B cell (primary cell): ENCODE measurements at regions of chr15 and their contacts with region 1.

Region 1: DNA sequence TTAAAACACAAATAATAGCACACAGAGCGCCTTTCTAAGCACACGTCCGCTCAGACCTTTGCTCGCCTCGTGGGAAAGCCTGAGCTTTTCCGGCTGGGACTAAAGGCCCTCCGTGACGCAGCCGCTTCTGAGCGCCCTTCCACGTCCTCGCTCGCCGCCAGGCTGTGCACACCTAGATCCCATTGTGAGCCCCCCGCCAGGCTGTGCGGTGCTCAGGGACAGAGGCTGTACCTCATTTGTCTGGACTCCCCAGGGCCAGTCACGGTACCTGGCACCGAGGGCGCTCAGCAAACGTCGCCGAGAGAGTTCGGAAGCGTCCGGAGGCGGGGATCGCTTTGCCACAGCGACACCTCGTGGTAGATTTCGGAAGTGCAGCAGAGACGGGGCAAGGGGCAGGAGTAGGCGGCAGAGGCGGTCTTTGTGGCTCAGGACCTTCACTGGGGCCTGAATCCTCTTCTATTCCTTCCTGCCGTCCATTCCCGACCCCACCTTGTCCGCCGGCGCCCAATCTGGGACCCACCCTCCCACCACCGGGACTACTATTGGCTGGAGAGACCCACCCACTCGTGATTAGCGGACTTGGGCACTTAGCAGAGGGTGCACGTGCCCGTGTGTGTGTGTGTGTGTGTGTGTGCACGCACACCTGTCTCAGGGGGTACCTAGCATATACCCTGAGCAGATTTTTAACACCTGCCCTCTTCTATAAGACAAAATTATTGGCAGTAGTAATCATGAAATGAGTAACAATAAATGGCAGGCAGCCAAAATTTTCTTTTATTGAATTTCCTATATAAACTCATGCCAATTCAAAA is 65.6 kb downstream of the RHCG start:
- DNase-seq: peak; percentile 90
- ATAC-seq: peak; percentile 97
- H3K4me3 ChIP-seq: peak overlapping the region; percentile 19 to 68 (median 50)
- H3K4me3 Mint-ChIP-seq: peak overlapping the region; percentile 94
- H3K27ac ChIP-seq: no peak overlapping the region
- H3K27ac Mint-ChIP-seq: peak overlapping the region; percentile 17
- H3K4me1 ChIP-seq: peaks cover 4 to 10% of the 10 kb centered on the region in 2 donors
- H3K4me1 Mint-ChIP-seq: peaks cover 7% of the 10 kb centered on the region
- H3K27me3 ChIP-seq: peaks cover 0 to 25% (median 3%) of the 10 kb centered on the region in 4 experiments
- H3K27me3 Mint-ChIP-seq: peaks cover 25% of the 10 kb centered on the region
- CTCF ChIP-seq: peak; percentile 98

Region 2: DNA sequence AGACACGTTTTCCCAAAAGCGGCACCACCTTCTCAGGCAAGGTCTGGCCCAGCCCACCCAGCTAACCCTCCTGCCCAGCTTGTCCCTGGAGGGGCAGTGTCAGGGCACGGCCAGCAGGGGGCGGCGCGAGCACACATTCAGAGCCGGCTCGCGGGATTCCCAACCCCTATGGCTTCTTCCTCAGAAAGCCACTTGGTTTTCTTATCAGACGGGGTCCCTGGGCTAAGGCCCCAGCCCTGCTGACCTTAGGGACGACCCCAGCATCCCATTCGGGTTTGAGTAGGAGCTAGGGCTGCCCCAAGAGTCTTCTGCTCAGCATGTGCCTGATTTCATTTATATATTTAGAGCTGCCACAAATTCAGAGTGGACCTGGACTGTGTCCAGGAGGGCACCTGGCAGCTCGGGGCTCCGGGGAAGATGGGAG is 223.8 kb before region 1 on chr15:
- CTCF ChIA-PET with region 1: interaction called, 6 read pairs
- POLR2A ChIA-PET with region 1: no interaction called
- intact Hi-C with region 1: loop called (anchors 5 kb)
- DNase-seq: peak; percentile 71
- ATAC-seq: peak; percentile 90
- H3K4me3 ChIP-seq: no peak overlapping the region
- H3K4me3 Mint-ChIP-seq: no peak overlapping the region
- H3K27ac ChIP-seq: no peak overlapping the region
- H3K27ac Mint-ChIP-seq: no peak overlapping the region
- H3K4me1 ChIP-seq: peaks cover 3% of the 10 kb centered on the region in 2 donors
- H3K4me1 Mint-ChIP-seq: peaks cover 9% of the 10 kb centered on the region
- H3K27me3 ChIP-seq: no peaks in the 10 kb centered on the region
- H3K27me3 Mint-ChIP-seq: peaks cover 4% of the 10 kb centered on the region
- CTCF ChIP-seq: peak; percentile 100

Region 3: DNA sequence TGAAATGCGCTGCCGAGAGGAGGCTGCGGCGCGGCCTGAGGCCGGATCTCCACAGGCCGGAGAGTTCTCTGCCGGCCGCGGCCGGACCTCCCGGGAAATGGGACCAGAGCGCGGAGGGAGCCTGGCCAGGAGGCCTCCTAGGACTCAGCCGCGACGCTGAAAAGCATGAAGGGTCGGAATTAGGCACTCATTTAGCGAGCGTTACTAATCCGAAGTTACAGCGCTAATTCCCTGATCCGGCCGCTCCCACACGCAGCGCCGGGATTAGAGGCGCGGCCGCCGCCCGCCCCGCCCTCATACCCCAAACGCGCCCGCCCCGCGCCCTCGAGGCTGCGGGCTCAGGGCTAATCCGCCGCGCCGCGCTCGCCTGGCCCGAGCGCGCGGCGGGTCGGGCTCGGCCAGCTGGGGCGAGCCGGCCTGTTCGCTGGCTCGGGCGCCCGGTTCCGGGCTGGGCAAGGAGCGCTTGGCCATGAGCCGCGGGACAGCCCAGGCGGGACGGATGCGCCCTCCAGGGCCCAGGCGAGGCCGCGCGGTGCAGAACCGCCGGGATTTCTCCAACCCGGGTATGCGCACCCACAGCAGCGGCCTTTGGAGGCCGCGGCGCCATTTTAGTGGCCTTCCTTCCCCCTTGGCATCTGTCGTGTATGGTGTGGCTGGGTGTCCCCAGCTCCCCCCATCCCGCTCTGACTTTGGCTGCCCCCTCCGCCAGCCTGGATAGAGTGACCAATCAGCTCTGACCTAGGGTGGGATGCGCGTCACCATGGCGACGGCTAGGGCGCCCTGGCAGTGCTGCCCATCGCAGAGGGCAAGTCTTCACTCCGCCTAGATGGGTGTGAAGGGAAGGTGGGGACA is 59.3 kb before region 1 on chr15:
- CTCF ChIA-PET with region 1: no interaction called
- POLR2A ChIA-PET with region 1: no interaction called
- intact Hi-C with region 1: no loop called
- DNase-seq: no peak
- ATAC-seq: no peak
- H3K4me3 ChIP-seq: no peak overlapping the region
- H3K4me3 Mint-ChIP-seq: no peak overlapping the region
- H3K27ac ChIP-seq: no peak overlapping the region
- H3K27ac Mint-ChIP-seq: no peak overlapping the region
- H3K4me1 ChIP-seq: peaks cover 25 to 35% of the 10 kb centered on the region in 2 donors
- H3K4me1 Mint-ChIP-seq: peaks cover 26% of the 10 kb centered on the region
- H3K27me3 ChIP-seq: peaks cover 0 to 93% (median 69%) of the 10 kb centered on the region in 4 experiments
- H3K27me3 Mint-ChIP-seq: peaks cover 62% of the 10 kb centered on the region
- CTCF ChIP-seq: no peak

Region 4: DNA sequence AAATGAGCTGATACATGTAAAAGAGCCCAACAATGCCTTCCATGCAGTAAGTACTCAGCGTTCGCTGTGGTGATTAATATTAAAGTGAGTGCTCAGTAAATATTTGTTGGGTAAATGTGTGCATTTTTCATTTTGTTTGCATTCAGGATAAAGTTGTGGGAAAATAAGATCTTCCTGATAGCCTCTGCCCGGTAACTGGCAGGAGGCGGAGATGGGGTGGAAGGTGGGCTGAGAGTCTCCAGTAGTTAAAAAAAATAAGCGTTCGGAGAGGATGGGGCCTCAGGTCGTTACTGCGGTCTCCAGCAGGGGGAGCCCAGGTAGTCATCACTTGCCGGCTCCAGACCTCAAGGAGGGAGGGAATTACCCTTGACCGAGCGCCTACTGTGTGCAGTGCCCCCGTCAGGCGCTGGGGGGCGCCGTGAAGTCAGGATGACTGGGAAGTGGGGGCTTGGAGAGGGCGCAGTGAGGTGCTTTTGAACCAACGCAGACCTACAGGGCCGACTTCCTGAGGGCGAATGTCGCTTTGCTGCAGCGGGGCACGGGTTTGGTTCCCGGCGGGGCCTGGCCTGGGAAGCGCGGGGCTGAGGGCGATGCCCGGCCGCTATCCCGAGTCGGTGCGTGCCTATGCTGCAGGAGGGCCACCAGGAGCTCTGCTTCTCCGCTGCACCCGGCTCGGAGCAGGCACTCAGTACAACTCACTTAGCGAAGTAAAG is 14.4 kb before region 1 on chr15:
- CTCF ChIA-PET with region 1: interaction called, 43 read pairs
- POLR2A ChIA-PET with region 1: no interaction called
- intact Hi-C with region 1: loop called (anchors 1 kb)
- DNase-seq: peak; percentile 86
- ATAC-seq: peak; percentile 89
- H3K4me3 ChIP-seq: no peak overlapping the region
- H3K4me3 Mint-ChIP-seq: peak overlapping the region; percentile 14
- H3K27ac ChIP-seq: no peak overlapping the region
- H3K27ac Mint-ChIP-seq: peak overlapping the region; percentile 24
- H3K4me1 ChIP-seq: peaks cover 25 to 43% of the 10 kb centered on the region in 2 donors
- H3K4me1 Mint-ChIP-seq: peaks cover 15% of the 10 kb centered on the region
- H3K27me3 ChIP-seq: peaks cover 0 to 88% (median 57%) of the 10 kb centered on the region in 4 experiments
- H3K27me3 Mint-ChIP-seq: peaks cover 82% of the 10 kb centered on the region
- CTCF ChIP-seq: peak; percentile 94

Region 5: DNA sequence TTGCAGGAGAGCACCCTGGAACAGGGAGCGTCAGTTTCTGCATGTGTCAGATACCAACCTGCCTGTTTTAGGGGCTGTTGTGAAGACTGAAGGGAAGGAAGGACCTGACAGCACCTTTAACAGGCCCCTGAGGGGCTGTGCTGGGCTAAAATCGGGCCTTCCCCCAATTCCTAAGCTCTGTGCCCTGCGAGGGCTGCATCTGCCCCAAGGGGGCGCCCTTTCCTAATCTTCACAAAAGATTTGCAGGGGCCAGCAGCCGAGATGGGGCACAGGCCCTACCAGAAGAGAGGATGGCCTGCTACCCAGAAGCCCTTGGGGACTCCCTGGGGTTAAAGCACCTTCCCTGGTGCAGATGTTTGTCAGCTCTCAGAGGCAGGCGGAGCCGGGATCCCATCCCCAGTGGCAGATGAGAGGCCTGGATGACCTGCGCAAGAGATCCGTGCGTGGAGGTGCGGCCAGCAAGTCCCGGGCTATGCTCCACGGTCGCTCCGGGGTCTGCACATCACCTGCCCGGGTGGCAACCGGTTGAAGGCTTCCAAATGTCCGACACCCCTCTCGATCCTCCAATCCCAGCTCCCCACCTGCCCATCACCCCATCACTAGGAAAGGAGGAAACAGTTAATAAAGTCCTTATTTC is 12.1 kb after region 1 on chr15:
- CTCF ChIA-PET with region 1: interaction called, 12 read pairs
- POLR2A ChIA-PET with region 1: no interaction called
- intact Hi-C with region 1: loop called (anchors 1 kb)
- DNase-seq: peak; percentile 41
- ATAC-seq: no peak
- H3K4me3 ChIP-seq: no peak overlapping the region
- H3K4me3 Mint-ChIP-seq: peak overlapping the region; percentile 37
- H3K27ac ChIP-seq: no peak overlapping the region
- H3K27ac Mint-ChIP-seq: no peak overlapping the region
- H3K4me1 ChIP-seq: peaks cover 29 to 34% of the 10 kb centered on the region in 2 donors
- H3K4me1 Mint-ChIP-seq: peaks cover 33% of the 10 kb centered on the region
- H3K27me3 ChIP-seq: peaks cover 0 to 15% (median 2%) of the 10 kb centered on the region in 4 experiments
- H3K27me3 Mint-ChIP-seq: peaks cover 23% of the 10 kb centered on the region
- CTCF ChIP-seq: peak; percentile 55